Caco-2 (cell line): ENCODE measurements at regions of chr19 and their contacts with region 1.

Region 1: DNA sequence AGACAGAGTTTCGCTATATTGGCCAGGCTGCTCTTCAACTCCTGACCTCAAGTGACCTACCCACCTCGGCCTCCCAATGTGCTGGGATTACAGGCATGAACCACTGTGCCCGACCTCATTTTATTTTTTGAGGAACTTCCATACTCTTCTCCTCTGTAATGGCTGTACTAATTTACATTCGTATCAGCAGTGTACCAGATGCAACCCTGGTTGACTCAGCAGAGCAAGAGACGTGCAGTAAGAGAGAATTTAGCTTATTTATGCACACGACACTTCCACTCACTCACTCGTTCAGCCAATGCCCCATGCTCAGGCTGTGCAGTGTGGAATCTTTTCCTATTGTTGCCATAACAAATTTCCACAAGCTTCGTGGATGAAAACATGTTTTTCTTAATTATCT is 6.9 kb downstream of the KIR3DL3 start:
- DNase-seq: no peak
- H3K4me3 ChIP-seq: no peak overlapping the region
- H3K4me3 Mint-ChIP-seq: no peak overlapping the region
- H3K27ac Mint-ChIP-seq: no peak overlapping the region
- H3K4me1 ChIP-seq: no peaks in the 10 kb centered on the region
- H3K4me1 Mint-ChIP-seq: no peaks in the 10 kb centered on the region
- H3K27me3 ChIP-seq: no peaks in the 10 kb centered on the region; the same call in 1 of the 2 replicates
- H3K27me3 Mint-ChIP-seq: peaks cover 39% of the 10 kb centered on the region
- CTCF ChIP-seq: no peak

Region 2: GRCh38 chr19:54696117-54696548 is 35.1 kb before region 1 on chr19:
- CTCF ChIA-PET with region 1: no interaction called
- POLR2A ChIA-PET with region 1: no interaction called
- intact Hi-C with region 1: no loop called
- DNase-seq: no peak
- H3K4me3 ChIP-seq: no peak overlapping the region
- H3K4me3 Mint-ChIP-seq: no peak overlapping the region
- H3K27ac Mint-ChIP-seq: no peak overlapping the region
- H3K4me1 ChIP-seq: no peaks in the 10 kb centered on the region
- H3K4me1 Mint-ChIP-seq: no peaks in the 10 kb centered on the region
- H3K27me3 ChIP-seq: no peaks in the 10 kb centered on the region; the same call in 1 of the 2 replicates
- H3K27me3 Mint-ChIP-seq: peaks cover 32% of the 10 kb centered on the region
- CTCF ChIP-seq: no peak

Region 3: DNA sequence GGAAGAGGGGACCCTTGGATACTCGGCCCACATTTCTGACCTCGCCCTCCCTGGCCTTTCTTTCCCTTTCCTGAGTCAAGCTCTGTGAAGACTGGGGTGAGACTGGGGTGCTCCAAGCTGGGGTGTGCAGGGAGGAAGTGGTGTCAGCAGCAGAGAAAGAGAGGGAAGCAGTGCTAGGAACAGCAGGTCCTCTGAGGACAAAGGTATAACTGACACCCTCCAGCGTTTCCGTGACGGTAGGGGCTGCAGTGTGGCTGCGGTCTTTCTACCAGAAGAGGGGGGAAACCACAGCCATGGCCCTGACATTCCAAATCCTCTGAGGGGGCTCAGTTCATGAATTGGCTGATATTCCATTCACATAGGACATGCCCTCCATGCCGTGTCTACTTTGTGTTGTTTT is 120.2 kb after region 1 on chr19:
- CTCF ChIA-PET with region 1: no interaction called
- POLR2A ChIA-PET with region 1: no interaction called
- intact Hi-C with region 1: loop called (anchors 2 kb)
- DNase-seq: no peak
- H3K4me3 ChIP-seq: no peak overlapping the region
- H3K4me3 Mint-ChIP-seq: no peak overlapping the region
- H3K27ac Mint-ChIP-seq: no peak overlapping the region
- H3K4me1 ChIP-seq: no peaks in the 10 kb centered on the region
- H3K4me1 Mint-ChIP-seq: no peaks in the 10 kb centered on the region
- H3K27me3 ChIP-seq: no peaks in the 10 kb centered on the region
- H3K27me3 Mint-ChIP-seq: peaks cover 33% of the 10 kb centered on the region
- CTCF ChIP-seq: no peak